Activated CD4-positive, alpha-beta T cell treated with anti-CD3 and anti-CD28 coated beads, Interleukin-2, amount 10 ng/mL, durations not matched to agents 7 days and 5 days (primary cell): ENCODE measurements at regions of chr17 and their contacts with region 1.

Region 1: GRCh38 chr17:82030470-82031302 is 792 bp upstream of the RAC3 start:
- DNase-seq: peak; percentile 86
- H3K4me3 Mint-ChIP-seq: peak overlapping the region; percentile 74
- H3K27ac Mint-ChIP-seq: peak overlapping the region; percentile 76
- H3K4me1 Mint-ChIP-seq: peaks cover 32% of the 10 kb centered on the region
- H3K27me3 Mint-ChIP-seq: no peaks in the 10 kb centered on the region

Region 2: GRCh38 chr17:82153745-82154375 is 123.2 kb after region 1 on chr17:
- CTCF ChIA-PET with region 1: interaction called, 21 read pairs
- POLR2A ChIA-PET with region 1: no interaction called
- DNase-seq: peak; percentile 86
- H3K4me3 Mint-ChIP-seq: no peak overlapping the region
- H3K27ac Mint-ChIP-seq: peak overlapping the region; percentile 60
- H3K4me1 Mint-ChIP-seq: peaks cover 6% of the 10 kb centered on the region
- H3K27me3 Mint-ChIP-seq: no peaks in the 10 kb centered on the region

Region 3: DNA sequence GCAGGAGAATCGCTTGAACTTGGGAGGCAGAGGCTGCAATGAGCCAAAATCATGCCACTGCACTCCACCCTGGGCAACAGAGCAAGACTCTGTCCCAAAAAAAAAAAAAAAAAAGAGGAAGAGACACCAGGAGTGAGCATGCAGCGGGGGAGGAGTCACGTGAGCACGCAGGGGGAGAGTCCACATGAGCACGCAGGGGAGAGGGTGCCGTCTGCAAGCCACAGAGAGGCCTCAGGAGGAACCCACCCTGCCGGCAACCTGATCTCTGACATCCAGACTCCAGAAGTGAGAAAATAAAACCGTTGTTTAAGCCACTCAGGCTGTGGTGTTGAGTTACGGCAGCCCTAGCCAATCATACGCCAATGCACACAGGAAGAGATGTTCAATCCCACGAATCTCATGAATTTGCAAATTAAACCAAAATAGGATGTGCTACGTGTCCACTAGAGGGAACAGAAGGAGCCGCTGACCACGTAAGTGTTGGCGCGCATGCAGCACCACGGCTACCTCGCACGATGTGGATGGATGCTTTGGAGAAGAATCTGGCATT is 139.8 kb after region 1 on chr17:
- CTCF ChIA-PET with region 1: interaction called, 11 read pairs
- POLR2A ChIA-PET with region 1: no interaction called
- DNase-seq: no peak
- H3K4me3 Mint-ChIP-seq: no peak overlapping the region
- H3K27ac Mint-ChIP-seq: no peak overlapping the region
- H3K4me1 Mint-ChIP-seq: peaks cover 25% of the 10 kb centered on the region
- H3K27me3 Mint-ChIP-seq: no peaks in the 10 kb centered on the region

Region 4: DNA sequence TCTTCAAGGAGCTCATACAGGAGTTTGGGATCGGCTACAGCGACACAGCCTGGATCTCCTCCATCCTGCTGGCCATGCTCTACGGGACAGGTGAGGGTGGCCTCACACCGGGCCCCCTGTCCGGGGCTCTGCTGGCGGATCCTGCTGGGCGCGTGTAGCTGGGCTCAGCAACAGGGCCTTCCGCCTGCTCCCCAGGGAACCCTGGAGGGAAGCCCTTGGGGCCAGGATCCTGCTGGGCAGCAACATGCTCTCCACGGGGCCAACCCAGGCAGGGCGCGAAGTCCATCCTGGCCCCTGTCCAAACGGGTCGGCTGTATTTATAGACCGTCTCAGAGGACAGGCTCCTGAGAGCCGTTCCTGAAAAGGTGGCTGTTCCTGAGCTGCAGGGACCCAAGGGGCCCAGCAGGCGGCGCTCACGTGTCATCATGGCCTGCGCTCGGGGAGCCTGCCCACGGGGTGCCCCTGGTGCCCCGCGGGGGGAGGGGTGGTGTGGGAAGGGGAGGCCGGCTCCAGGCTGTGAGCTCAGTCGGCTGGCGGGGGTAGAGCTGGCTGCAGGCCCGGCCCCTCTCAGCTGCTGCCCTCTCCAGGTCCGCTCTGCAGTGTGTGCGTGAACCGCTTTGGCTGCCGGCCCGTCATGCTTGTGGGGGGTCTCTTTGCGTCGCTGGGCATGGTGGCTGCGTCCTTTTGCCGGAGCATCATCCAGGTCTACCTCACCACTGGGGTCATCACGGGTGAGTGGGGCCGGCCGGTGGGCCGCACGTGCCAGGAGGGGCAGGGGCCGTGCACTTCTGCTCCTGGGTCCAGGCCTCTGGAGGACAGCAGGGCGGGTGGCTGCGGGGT is 205.7 kb after region 1 on chr17:
- CTCF ChIA-PET with region 1: interaction called, 13 read pairs
- POLR2A ChIA-PET with region 1: no interaction called
- DNase-seq: peak; percentile 74
- H3K4me3 Mint-ChIP-seq: no peak overlapping the region
- H3K27ac Mint-ChIP-seq: peak overlapping the region; percentile 50
- H3K4me1 Mint-ChIP-seq: peaks cover 53% of the 10 kb centered on the region
- H3K27me3 Mint-ChIP-seq: no peaks in the 10 kb centered on the region